ENCODE measurements at regions of chr3 and their contacts with region 1.

Region 1: GRCh38 chr3:149480325-149481017 is 6.0 kb downstream of the TM4SF4 start:
- DNase-seq: peak; percentile 85
- ATAC-seq: peak; percentile 98
- H3K4me3 ChIP-seq: no peak overlapping the region
- H3K27ac ChIP-seq: peak overlapping the region; percentile 48
- H3K4me1 ChIP-seq: peaks cover 22% of the 10 kb centered on the region
- H3K27me3 ChIP-seq: no peaks in the 10 kb centered on the region
- CTCF ChIP-seq: peak; percentile 95
- EP300 ChIP-seq: peak in 1 of 2 experiments; percentile 53; a peak in 1 of 4 replicates
- POLR2A ChIP-seq: no peak
- RAD21 ChIP-seq: peak; percentile 95

Region 2: DNA sequence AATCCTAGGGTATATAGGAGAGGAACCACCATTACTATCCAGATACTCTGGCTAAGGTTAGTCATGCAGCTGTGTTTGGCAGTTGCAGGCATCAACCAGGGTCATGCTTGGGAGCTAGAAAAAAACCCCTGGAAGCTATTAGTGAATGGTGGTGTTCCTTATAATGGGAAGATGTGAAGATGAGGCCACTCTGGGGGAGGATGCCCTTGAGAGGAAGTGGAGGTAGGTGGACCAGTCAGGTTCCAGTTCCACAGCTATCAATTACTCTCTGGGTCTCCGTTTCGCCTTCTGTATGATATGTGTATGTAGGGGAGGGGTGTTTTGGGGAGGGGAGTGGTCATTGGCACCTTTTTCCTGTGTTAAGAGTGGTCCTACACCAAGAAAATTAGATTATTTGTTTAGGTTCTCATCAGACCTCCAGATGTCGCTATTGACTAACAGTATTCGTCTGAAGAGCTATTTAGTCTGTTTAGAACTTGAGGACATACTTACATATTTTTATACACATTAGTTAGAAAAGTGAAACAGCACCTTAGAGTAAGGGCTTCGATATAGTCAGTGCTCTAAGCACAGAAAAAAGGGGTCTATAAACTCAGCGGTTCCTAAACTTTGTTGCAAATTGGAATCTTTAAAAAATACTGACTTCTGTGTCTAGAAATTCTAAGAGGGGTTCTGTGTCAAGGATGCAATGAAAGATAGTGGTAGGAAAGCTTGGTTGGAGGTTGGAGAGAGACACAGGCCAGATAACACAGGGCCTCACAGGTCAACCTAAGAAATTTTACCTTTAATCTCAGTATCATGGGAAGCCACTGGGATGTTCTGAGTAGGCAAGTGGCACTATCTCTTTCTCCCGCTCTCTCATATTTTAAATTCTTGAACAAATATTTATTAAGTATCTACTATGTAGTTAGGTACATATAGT is 360.2 kb before region 1 on chr3:
- CTCF ChIA-PET with region 1: no interaction called
- POLR2A ChIA-PET with region 1: no interaction called
- in situ Hi-C with region 1: loop called (anchors 10 kb)
- intact Hi-C with region 1: loop called (anchors 2 kb)
- DNase-seq: peak; percentile 62
- ATAC-seq: peak; percentile 83
- H3K4me3 ChIP-seq: no peak overlapping the region
- H3K27ac ChIP-seq: no peak overlapping the region
- H3K4me1 ChIP-seq: peaks cover 26% of the 10 kb centered on the region; the same call in 1 of the 2 replicates
- H3K27me3 ChIP-seq: peaks cover 2 to 10% of the 10 kb centered on the region in 2 experiments; a peak in 2 of 5 replicates
- CTCF ChIP-seq: peak; percentile 78
- EP300 ChIP-seq: no peak
- POLR2A ChIP-seq: no peak
- RAD21 ChIP-seq: peak; percentile 65; the same call in 1 of the 2 replicates

Region 3: GRCh38 chr3:149273096-149273751 is 207.2 kb before region 1 on chr3:
- CTCF ChIA-PET with region 1: no interaction called
- POLR2A ChIA-PET with region 1: no interaction called
- in situ Hi-C with region 1: no loop called
- intact Hi-C with region 1: loop called (anchors 10 kb)
- DNase-seq: peak; percentile 81
- ATAC-seq: peak; percentile 81
- H3K4me3 ChIP-seq: no peak overlapping the region
- H3K27ac ChIP-seq: no peak overlapping the region
- H3K4me1 ChIP-seq: peaks cover 44% of the 10 kb centered on the region
- H3K27me3 ChIP-seq: no peaks in the 10 kb centered on the region
- CTCF ChIP-seq: peak; percentile 96
- EP300 ChIP-seq: no peak
- POLR2A ChIP-seq: no peak
- RAD21 ChIP-seq: peak; percentile 96

Region 4: DNA sequence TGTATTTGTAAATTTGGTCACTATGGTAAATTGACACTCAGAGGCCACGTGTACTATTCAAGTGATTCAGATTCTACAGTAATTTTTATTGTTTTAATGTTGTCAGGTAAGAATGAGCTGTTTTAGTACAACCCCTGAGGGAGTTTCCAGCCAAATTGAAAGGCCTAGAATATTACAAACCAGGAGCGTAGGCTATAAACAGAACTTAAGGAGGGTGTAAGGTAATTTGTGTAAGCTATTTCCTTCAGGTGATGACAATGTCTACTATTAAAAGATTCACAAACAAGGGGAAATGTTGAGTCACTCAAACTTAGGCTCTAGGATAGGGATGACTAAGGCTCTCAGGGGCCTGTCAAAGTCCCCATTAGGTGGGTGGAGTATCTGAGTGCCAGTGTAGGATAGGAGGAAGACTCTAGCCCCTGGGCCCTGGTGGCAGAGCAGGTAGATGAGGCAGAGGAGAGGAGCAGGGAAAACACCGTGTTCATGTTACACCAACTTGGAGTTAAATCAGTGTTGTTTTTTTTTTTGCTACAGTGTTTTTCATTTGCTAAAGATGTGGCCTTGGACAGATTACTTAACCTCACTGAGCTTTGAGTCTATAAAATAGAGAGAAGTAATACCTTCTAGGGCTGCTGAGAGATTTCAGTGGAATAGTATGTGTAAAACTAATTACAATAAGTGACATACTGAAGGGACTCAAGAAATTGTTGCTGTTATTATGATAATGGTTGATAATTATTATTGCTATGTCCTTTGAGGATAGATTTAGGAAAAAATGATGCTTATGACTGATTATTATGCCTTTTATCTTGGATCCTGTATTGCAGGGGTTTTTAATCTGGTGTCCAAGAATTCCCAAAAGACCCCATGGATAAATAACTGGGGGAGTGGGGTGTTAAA is 113.3 kb before region 1 on chr3:
- CTCF ChIA-PET with region 1: interaction called, 4 read pairs
- POLR2A ChIA-PET with region 1: interaction called, 8 read pairs
- in situ Hi-C with region 1: no loop called
- intact Hi-C with region 1: loop called (anchors 5 kb)
- DNase-seq: peak; percentile 88
- ATAC-seq: peak; percentile 89
- H3K4me3 ChIP-seq: no peak overlapping the region
- H3K27ac ChIP-seq: peak overlapping the region; percentile 67
- H3K4me1 ChIP-seq: peaks cover 81% of the 10 kb centered on the region
- H3K27me3 ChIP-seq: no peaks in the 10 kb centered on the region
- CTCF ChIP-seq: no peak
- EP300 ChIP-seq: 0 out of 4 replicates have a peak, but pooled peaks of 1 of the 2 experiments have one; percentile 10
- POLR2A ChIP-seq: peak in 1 of 2 experiments; percentile 72; a peak in 1 of 4 replicates
- RAD21 ChIP-seq: no peak

Region 5: DNA sequence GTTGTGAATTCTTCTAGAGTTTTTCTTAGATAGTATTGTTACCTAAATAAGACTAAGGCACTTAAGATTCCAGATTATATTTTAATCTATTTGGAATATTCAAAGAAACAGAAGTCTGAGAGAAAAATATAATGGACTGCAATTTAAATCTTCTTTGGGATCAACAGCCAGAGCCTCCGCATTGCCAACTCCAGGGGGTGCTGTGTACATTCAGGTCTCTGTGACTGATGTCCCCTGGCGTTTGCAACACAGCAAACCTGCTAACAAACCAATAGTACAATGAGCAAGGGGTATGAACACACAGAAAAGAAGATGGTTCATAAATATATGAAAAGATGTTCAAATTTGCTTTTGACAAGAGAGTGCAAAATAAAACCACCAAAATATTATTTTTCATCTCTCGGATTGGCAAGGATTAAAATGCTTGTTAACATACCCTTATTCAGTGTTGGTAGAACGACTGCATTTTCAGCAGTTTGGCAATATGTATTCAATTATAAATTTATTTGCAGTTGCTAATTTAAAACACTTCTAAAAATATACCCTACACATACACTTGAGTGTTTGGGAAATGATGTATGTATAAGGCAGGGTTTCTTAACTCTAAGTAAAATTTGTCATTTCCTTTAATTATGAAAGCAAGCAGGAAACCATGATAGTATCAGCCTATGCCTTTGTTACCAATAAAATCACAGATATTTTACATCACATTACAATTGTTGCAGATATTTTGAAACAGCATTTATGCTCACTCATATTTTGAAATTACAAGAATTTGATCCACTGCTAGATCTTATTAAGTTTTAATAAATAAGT is 86.9 kb before region 1 on chr3:
- CTCF ChIA-PET with region 1: interaction called, 37 read pairs
- POLR2A ChIA-PET with region 1: interaction called, 4 read pairs
- in situ Hi-C with region 1: loop called (anchors 5 kb)
- intact Hi-C with region 1: loop called (anchors 1 kb)
- DNase-seq: peak; percentile 81
- ATAC-seq: peak; percentile 86
- H3K4me3 ChIP-seq: no peak overlapping the region
- H3K27ac ChIP-seq: no peak overlapping the region
- H3K4me1 ChIP-seq: peaks cover 98% of the 10 kb centered on the region
- H3K27me3 ChIP-seq: no peaks in the 10 kb centered on the region
- CTCF ChIP-seq: peak; percentile 86
- EP300 ChIP-seq: no peak
- POLR2A ChIP-seq: no peak
- RAD21 ChIP-seq: peak; percentile 94

Measured in HepG2 (cell line).